CD4-positive, alpha-beta memory T cell (primary cell): ENCODE measurements at regions of chr5 and their contacts with region 1.

Region 1: GRCh38 chr5:67246108-67246507 is 49.5 kb upstream of the CD180 start:
- DNase-seq: peak in 4 of 5 donors; percentile 60 to 67 (median 64)
- H3K4me3 ChIP-seq: no peak overlapping the region
- H3K4me3 Mint-ChIP-seq: no peak overlapping the region
- H3K27ac ChIP-seq: no peak overlapping the region
- H3K27ac Mint-ChIP-seq: no peak overlapping the region
- H3K4me1 ChIP-seq: peaks cover 18% of the 10 kb centered on the region
- H3K4me1 Mint-ChIP-seq: peaks cover 8 to 20% (median 11%) of the 10 kb centered on the region in 4 donors
- H3K27me3 ChIP-seq: no peaks in the 10 kb centered on the region
- H3K27me3 Mint-ChIP-seq: peaks cover 0 to 1% of the 10 kb centered on the region in 2 donors

Region 2: GRCh38 chr5:66757188-66757833 is 488.8 kb before region 1 on chr5:
- CTCF ChIA-PET with region 1: no interaction called
- POLR2A ChIA-PET with region 1: no interaction called
- intact Hi-C with region 1: no loop called
- DNase-seq: peak in 4 of 5 donors; percentile 4 to 14 (median 10)
- H3K4me3 ChIP-seq: no peak overlapping the region
- H3K4me3 Mint-ChIP-seq: no peak overlapping the region
- H3K27ac ChIP-seq: no peak overlapping the region
- H3K27ac Mint-ChIP-seq: no peak overlapping the region
- H3K4me1 ChIP-seq: no peaks in the 10 kb centered on the region
- H3K4me1 Mint-ChIP-seq: no peaks in the 10 kb centered on the region
- H3K27me3 ChIP-seq: no peaks in the 10 kb centered on the region
- H3K27me3 Mint-ChIP-seq: peaks cover 5 to 12% of the 10 kb centered on the region in 2 donors

Region 3: GRCh38 chr5:67221487-67222242 is 24.4 kb before region 1 on chr5:
- CTCF ChIA-PET with region 1: interaction called, 26 read pairs
- POLR2A ChIA-PET with region 1: interaction called, 7 read pairs
- intact Hi-C with region 1: no loop called
- DNase-seq: peak; percentile 55 to 74 (median 63)
- H3K4me3 ChIP-seq: peak overlapping the region in 1 of 2 donors; percentile 6
- H3K4me3 Mint-ChIP-seq: peak overlapping the region in 7 of 8 donors; percentile 64 to 85 (median 75)
- H3K27ac ChIP-seq: peak overlapping the region; percentile 36
- H3K27ac Mint-ChIP-seq: peak overlapping the region; percentile 88 to 96 (median 94)
- H3K4me1 ChIP-seq: peaks cover 67% of the 10 kb centered on the region
- H3K4me1 Mint-ChIP-seq: peaks cover 57 to 81% (median 64%) of the 10 kb centered on the region in 4 donors
- H3K27me3 ChIP-seq: no peaks in the 10 kb centered on the region
- H3K27me3 Mint-ChIP-seq: no peaks in the 10 kb centered on the region

Region 4: GRCh38 chr5:67263656-67264408 is 17.7 kb after region 1 on chr5:
- CTCF ChIA-PET with region 1: interaction called, 13 read pairs
- POLR2A ChIA-PET with region 1: no interaction called
- intact Hi-C with region 1: no loop called
- DNase-seq: no peak
- H3K4me3 ChIP-seq: no peak overlapping the region
- H3K4me3 Mint-ChIP-seq: no peak overlapping the region
- H3K27ac ChIP-seq: no peak overlapping the region
- H3K27ac Mint-ChIP-seq: peak overlapping the region in 1 of 7 donors; percentile 7
- H3K4me1 ChIP-seq: no peaks in the 10 kb centered on the region
- H3K4me1 Mint-ChIP-seq: no peaks in the 10 kb centered on the region
- H3K27me3 ChIP-seq: no peaks in the 10 kb centered on the region
- H3K27me3 Mint-ChIP-seq: peaks cover 0 to 4% of the 10 kb centered on the region in 2 donors

Region 5: DNA sequence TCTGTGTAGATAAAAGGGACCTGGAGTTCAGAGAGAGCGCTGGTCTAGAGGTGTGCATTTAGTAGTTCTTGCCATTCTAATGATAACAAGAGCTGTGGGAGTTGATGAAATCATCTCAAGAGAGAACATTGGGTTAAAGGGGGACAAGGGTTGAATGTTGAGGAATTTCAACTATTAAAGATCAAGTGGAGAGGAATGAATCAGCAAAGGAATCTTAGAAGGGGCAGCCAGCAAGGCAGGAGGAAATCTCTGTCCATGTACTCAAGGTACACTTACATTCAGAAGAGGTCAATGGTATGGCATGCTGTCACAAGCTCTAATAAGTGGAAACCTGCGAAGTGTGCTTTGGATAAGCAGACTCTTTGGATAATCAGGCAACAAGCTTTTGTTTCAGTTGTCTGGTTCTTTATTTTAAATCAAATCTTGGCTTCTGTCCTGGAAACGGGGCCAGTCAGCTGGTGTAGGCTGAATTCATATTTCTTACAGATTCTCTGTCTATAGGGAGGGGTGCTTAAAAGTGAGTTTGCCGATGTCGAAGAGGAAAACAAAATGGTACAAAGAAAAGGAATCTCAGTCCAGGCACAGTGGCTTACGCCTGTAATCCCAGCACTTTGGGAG is 270.9 kb after region 1 on chr5:
- CTCF ChIA-PET with region 1: no interaction called
- POLR2A ChIA-PET with region 1: no interaction called
- intact Hi-C with region 1: loop called (anchors 10 kb)
- DNase-seq: no peak
- H3K4me3 ChIP-seq: no peak overlapping the region
- H3K4me3 Mint-ChIP-seq: peak overlapping the region in 1 of 8 donors; percentile 1
- H3K27ac ChIP-seq: no peak overlapping the region
- H3K27ac Mint-ChIP-seq: peak overlapping the region in 1 of 7 donors; percentile 9
- H3K4me1 ChIP-seq: peaks cover 49% of the 10 kb centered on the region
- H3K4me1 Mint-ChIP-seq: peaks cover 40 to 57% (median 46%) of the 10 kb centered on the region in 4 donors
- H3K27me3 ChIP-seq: no peaks in the 10 kb centered on the region
- H3K27me3 Mint-ChIP-seq: no peaks in the 10 kb centered on the region

Region 6: DNA sequence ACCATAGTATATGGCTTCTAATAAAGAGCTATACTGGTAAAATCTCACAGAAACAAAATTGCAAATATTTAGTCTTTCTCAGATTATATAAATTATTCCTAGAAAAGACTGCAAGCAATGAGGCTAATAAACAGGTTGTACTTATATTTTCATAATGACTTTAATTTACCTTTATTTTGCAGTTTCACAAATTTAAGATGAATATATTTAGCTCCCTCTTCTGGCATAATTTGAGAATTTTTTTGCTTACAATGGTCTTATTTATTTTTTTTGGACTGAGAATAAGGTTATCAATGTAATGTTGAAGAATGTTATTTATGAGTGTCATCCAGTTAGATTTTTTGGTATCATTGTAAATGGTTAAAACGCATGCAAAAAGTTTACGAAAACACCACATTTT is 1026.2 kb after region 1 on chr5:
- CTCF ChIA-PET with region 1: interaction called, 40 read pairs
- POLR2A ChIA-PET with region 1: interaction called, 3 read pairs
- intact Hi-C with region 1: loop called (anchors 1 kb)
- DNase-seq: peak in 2 of 5 donors; percentile 44 to 50
- H3K4me3 ChIP-seq: no peak overlapping the region
- H3K4me3 Mint-ChIP-seq: peak overlapping the region in 4 of 8 donors; percentile 15 to 46 (median 22)
- H3K27ac ChIP-seq: no peak overlapping the region
- H3K27ac Mint-ChIP-seq: peak overlapping the region; percentile 56 to 99 (median 80)
- H3K4me1 ChIP-seq: peaks cover 97% of the 10 kb centered on the region
- H3K4me1 Mint-ChIP-seq: peaks cover 66 to 95% (median 81%) of the 10 kb centered on the region in 4 donors
- H3K27me3 ChIP-seq: no peaks in the 10 kb centered on the region
- H3K27me3 Mint-ChIP-seq: no peaks in the 10 kb centered on the region

Region 7: GRCh38 chr5:68460147-68460798 is 1214.2 kb after region 1 on chr5:
- CTCF ChIA-PET with region 1: interaction called, 5 read pairs
- POLR2A ChIA-PET with region 1: no interaction called
- intact Hi-C with region 1: loop called (anchors 1 kb)
- DNase-seq: peak; percentile 49 to 59 (median 52)
- H3K4me3 ChIP-seq: no peak overlapping the region
- H3K4me3 Mint-ChIP-seq: no peak overlapping the region
- H3K27ac ChIP-seq: no peak overlapping the region
- H3K27ac Mint-ChIP-seq: peak overlapping the region in 1 of 7 donors; percentile 17
- H3K4me1 ChIP-seq: peaks cover 27% of the 10 kb centered on the region
- H3K4me1 Mint-ChIP-seq: peaks cover 11 to 21% (median 12%) of the 10 kb centered on the region in 4 donors
- H3K27me3 ChIP-seq: no peaks in the 10 kb centered on the region
- H3K27me3 Mint-ChIP-seq: no peaks in the 10 kb centered on the region

Region 8: DNA sequence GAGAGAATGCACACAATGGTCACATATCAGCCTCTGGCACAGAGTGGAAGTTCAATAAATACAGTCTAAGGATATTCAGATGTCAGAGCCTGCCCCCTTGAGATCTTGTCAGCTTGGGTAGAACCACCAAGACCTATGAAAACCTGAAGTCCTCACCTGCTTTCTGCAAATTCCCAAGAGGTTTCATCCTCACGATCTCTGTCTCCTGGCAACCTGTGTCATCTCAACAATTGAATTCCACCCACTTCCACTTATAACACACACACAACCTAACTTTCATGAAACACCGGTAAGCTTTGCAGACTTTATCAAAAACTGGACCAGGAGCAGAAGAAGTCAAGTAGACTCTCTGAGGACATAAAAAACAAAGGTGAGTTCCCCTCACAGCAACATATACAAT is 1696.1 kb after region 1 on chr5:
- CTCF ChIA-PET with region 1: no interaction called
- POLR2A ChIA-PET with region 1: no interaction called
- intact Hi-C with region 1: no loop called
- DNase-seq: no peak
- H3K4me3 ChIP-seq: no peak overlapping the region
- H3K4me3 Mint-ChIP-seq: no peak overlapping the region
- H3K27ac ChIP-seq: no peak overlapping the region
- H3K27ac Mint-ChIP-seq: no peak overlapping the region
- H3K4me1 ChIP-seq: no peaks in the 10 kb centered on the region
- H3K4me1 Mint-ChIP-seq: no peaks in the 10 kb centered on the region
- H3K27me3 ChIP-seq: no peaks in the 10 kb centered on the region
- H3K27me3 Mint-ChIP-seq: peaks cover 4 to 8% of the 10 kb centered on the region in 2 donors

Region 9: GRCh38 chr5:69007726-69008368 is 1761.7 kb after region 1 on chr5:
- CTCF ChIA-PET with region 1: interaction called, 7 read pairs
- POLR2A ChIA-PET with region 1: no interaction called
- intact Hi-C with region 1: loop called (anchors 1 kb)
- DNase-seq: peak; percentile 49 to 57 (median 54)
- H3K4me3 ChIP-seq: no peak overlapping the region
- H3K4me3 Mint-ChIP-seq: no peak overlapping the region
- H3K27ac ChIP-seq: no peak overlapping the region
- H3K27ac Mint-ChIP-seq: no peak overlapping the region
- H3K4me1 ChIP-seq: no peaks in the 10 kb centered on the region
- H3K4me1 Mint-ChIP-seq: no peaks in the 10 kb centered on the region
- H3K27me3 ChIP-seq: no peaks in the 10 kb centered on the region
- H3K27me3 Mint-ChIP-seq: peaks cover 15 to 18% of the 10 kb centered on the region in 2 donors